ENCODE measurements at regions of chr13 and their contacts with region 1.

Region 1: DNA sequence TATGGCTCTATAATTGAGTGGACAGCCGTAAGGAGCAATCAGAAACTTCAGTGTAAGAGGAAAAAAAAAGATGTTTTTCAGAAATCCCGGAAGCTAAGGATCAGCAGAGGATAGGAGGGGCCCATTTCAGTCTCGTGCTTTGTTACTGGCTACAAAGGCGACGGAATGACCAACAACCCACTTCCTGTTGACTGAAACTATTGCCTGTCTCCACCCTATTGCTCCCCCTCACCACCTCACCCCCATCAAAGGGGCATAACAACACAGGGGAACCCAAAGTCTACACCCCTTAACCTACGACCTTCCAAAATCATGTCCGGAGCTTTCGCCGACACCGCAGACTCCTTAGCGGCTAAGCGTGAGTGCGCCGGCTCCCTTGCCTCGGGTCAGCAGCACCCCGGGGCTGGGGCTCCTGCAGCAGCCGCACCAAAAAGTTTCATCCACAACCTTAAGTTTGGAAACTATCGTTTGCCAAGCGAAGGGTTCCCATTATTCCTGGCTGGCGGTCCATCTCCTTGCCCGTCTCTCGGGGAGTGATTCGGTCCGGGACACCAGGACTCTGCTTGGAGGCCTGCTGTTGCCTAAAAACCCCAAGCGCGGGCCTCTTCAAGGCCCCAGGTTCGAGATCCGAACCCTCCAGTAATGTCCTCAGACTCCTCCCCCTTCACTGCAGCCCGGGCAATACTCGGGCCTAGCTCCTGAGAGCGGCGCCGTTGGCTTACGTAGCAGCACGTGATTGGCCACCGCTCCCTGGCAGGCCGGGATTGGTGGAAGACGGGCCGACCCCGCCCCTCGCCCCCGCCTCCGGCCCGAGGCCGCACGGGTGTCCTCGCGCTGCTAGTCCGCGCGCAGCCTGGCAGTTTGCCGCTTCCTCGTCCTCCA is at the start of gene TPP2:
- DNase-seq: peak; percentile 99 to 100 (median 100)
- H3K4me3 ChIP-seq: peak within 1 kb of the TSS; percentile 74 to 95 (median 92)
- H3K27ac ChIP-seq: peak within 1 kb of the TSS; percentile 56 to 98 (median 98)
- H3K4me1 ChIP-seq: peaks cover 10 to 31% of the 10 kb centered on the region in 2 donors
- H3K27me3 ChIP-seq: no peaks in the 10 kb centered on the region
- CTCF ChIP-seq: no peak
- POLR2A ChIP-seq: peak in 1 of 2 donors; percentile 23
- total RNA-seq, gene TPP2: 16.5 to 50.6 (median 26.5) TPM

Region 2: GRCh38 chr13:102536695-102537485 is 59.5 kb before region 1 on chr13:
- intact Hi-C with region 1: no loop called
- DNase-seq: no peak
- H3K4me3 ChIP-seq: no peak overlapping the region
- H3K27ac ChIP-seq: no peak overlapping the region
- H3K4me1 ChIP-seq: no peaks in the 10 kb centered on the region
- H3K27me3 ChIP-seq: no peaks in the 10 kb centered on the region
- CTCF ChIP-seq: no peak
- POLR2A ChIP-seq: no peak

Region 3: DNA sequence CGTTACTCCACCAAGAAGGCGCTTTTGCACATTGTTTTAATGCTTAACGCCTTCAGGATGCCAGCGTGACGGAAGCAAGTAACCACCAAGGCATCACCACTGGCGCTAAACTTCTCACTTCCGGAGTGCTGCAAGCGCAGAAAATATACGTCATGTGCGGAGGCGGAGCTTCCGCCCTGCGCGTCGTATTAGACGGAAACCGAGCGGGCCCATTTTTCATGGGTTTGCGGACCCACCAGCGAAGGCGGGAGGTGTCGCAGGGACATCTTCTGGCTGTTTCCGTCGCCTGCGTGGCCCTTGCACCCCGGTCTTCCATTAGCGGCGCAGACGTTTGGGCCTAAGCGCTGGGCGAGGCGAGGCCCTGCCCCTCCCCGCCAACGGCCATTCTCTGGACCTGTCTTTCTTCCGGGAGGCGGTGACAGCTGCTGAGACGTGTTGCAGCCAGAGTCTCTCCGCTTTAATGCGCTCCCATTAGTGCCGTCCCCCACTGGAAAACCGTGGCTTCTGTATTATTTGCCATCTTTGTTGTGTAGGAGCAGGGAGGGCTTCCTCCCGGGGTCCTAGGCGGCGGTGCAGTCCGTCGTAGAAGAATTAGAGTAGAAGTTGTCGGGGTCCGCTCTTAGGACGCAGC is 249.4 kb after region 1 on chr13 and contains the start of gene ERCC5:
- intact Hi-C with region 1: loop called (anchors 5 kb)
- DNase-seq: peak; percentile 95 to 98 (median 96)
- H3K4me3 ChIP-seq: peak within 1 kb of the TSS; percentile 63 to 92 (median 76)
- H3K27ac ChIP-seq: peak within 1 kb of the TSS; percentile 89 to 98 (median 96)
- H3K4me1 ChIP-seq: peaks cover 4 to 23% of the 10 kb centered on the region in 2 donors
- H3K27me3 ChIP-seq: no peaks in the 10 kb centered on the region
- CTCF ChIP-seq: peak in 1 of 6 experiments; percentile 8
- POLR2A ChIP-seq: peak; percentile 73 to 89
- total RNA-seq, gene ERCC5: 37.8 to 76.1 (median 58.7) TPM

Region 4: DNA sequence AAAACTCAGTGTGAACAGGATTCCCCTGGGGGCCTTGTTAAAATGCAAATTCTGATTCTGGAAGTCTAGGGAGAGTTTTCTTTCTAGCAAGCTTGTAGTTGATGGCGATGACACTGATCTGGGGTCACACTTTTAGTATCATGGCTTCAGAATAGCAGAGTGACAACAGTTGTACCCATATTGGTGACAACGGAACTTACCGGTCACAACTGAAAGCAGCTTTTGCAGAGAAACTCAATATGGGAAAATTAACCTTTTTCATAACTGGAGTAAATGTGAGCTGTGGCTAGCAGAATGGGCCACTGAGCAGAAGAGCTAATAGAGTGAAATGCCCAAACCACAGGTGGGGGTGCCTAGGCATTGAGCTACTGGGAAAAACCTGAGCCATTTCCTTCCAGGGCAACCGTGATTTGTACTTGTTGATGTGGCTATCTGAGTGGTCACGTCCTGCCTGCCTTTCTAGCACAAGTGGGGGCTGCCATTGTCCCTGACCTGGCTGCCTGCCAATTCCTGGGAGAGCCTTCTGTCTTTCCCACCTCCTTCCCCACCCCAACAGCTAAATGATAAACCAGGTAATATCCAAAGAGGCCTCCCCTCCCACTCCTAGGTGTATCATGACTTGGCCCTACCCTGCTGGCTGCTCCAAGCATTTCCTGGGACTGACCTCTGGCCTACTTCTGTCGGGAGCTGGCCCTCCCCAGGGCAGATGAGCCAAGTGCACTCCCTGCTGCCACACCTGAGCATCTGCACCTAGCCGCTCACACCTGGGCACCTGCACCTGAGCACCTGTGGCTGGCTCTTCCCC is 471.6 kb after region 1 on chr13:
- intact Hi-C with region 1: no loop called
- DNase-seq: no peak
- H3K4me3 ChIP-seq: no peak overlapping the region
- H3K27ac ChIP-seq: no peak overlapping the region
- H3K4me1 ChIP-seq: no peaks in the 10 kb centered on the region
- H3K27me3 ChIP-seq: no peaks in the 10 kb centered on the region
- CTCF ChIP-seq: no peak
- POLR2A ChIP-seq: no peak

Measured in adrenal gland (tissue), 19 donors.